ENCODE measurements at regions of chr10 and their contacts with region 1.

Region 1: GRCh38 chr10:21860718-21861117 is 142.8 kb downstream of the DNAJC1 start:
- DNase-seq: no peak
- H3K4me3 Mint-ChIP-seq: no peak overlapping the region
- H3K27ac Mint-ChIP-seq: no peak overlapping the region
- H3K4me1 Mint-ChIP-seq: peaks cover 12% of the 10 kb centered on the region
- H3K27me3 Mint-ChIP-seq: no peaks in the 10 kb centered on the region

Region 2: DNA sequence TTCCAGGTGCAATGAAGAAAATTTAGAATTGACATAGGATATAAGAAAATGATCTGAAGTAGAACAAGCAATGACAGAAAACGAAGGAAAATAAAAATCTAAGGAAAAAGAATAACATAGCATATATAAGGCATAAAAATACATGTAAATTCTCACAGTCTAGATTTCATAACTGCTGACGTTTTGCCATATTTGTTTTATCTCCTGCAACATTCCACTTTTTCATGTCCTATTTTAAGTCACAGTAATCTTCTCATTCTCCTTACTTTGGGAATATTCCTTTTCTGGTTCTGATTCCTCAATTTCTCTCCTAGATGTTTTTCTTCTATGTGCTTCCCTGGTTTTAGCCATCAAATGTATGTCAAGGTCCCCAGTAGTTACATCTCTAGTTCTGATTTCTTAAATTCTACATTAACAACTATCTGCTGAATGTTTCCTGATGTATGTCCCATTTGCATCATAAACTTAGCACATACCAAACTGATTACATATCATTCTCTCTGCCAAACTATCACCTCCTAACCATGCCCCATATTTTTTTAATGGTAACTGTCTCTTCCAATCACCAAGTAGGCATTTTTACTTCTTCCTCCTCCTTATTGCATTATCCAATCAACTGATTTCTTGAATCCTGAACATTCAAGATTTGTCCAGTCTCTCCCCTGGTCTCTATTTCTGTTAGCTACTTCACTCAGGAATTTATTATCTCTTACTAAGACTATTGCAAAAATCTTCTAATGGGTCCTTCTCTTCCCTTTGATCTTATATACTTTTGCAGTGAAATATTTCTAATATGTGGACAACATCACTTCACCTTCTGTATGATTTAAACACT is 28.5 kb before region 1 on chr10:
- CTCF ChIA-PET with region 1: no interaction called
- POLR2A ChIA-PET with region 1: no interaction called
- DNase-seq: no peak
- H3K4me3 Mint-ChIP-seq: no peak overlapping the region
- H3K27ac Mint-ChIP-seq: no peak overlapping the region
- H3K4me1 Mint-ChIP-seq: no peaks in the 10 kb centered on the region
- H3K27me3 Mint-ChIP-seq: no peaks in the 10 kb centered on the region

Region 3: DNA sequence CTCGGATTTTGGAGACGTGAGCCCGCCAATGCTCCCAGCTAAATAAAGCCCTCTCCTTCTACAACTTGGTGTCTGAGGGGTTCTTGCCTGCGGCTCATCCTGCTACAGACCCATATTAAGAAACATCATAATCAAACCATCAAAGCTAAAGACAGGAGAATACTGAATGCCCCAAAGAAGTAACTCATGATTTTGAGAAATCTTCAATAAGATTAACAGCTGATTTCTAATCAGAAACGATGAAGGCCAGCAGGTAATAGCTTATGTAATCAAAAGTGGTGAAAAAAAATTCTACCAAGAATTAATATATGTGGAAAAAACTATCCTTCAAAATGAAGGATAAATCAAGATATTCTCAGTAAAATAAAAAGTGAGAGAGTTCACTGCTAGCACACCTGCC is 12.5 kb after region 1 on chr10:
- CTCF ChIA-PET with region 1: no interaction called
- POLR2A ChIA-PET with region 1: no interaction called
- DNase-seq: no peak
- H3K4me3 Mint-ChIP-seq: no peak overlapping the region
- H3K27ac Mint-ChIP-seq: no peak overlapping the region
- H3K4me1 Mint-ChIP-seq: no peaks in the 10 kb centered on the region
- H3K27me3 Mint-ChIP-seq: no peaks in the 10 kb centered on the region

Region 4: GRCh38 chr10:22619101-22619500 is 758.4 kb after region 1 on chr10:
- CTCF ChIA-PET with region 1: no interaction called
- POLR2A ChIA-PET with region 1: interaction called, 11 read pairs
- DNase-seq: no peak
- H3K4me3 Mint-ChIP-seq: no peak overlapping the region
- H3K27ac Mint-ChIP-seq: no peak overlapping the region
- H3K4me1 Mint-ChIP-seq: peaks cover 92% of the 10 kb centered on the region
- H3K27me3 Mint-ChIP-seq: no peaks in the 10 kb centered on the region

Measured in activated CD4-positive, alpha-beta T cell treated with anti-CD3 and anti-CD28 coated beads, Interleukin-2, amount 10 ng/mL, durations not matched to agents 7 days and 5 days (primary cell).